ENCODE measurements at regions of chr1 and their contacts with region 1.

Region 1: GRCh38 chr1:109984456-109985275 is at the start of gene AHCYL1:
- DNase-seq: peak; percentile 98 to 99 (median 99)
- H3K4me3 ChIP-seq: peak within 1 kb of the TSS; percentile 58 to 75
- H3K4me3 Mint-ChIP-seq: peak within 1 kb of the TSS; percentile 97 to 100 (median 99)
- H3K27ac ChIP-seq: peak within 1 kb of the TSS; percentile 82
- H3K27ac Mint-ChIP-seq: peak within 1 kb of the TSS; percentile 96 to 99 (median 99)
- H3K4me1 ChIP-seq: peaks cover 31% of the 10 kb centered on the region
- H3K4me1 Mint-ChIP-seq: peaks cover 25 to 48% (median 35%) of the 10 kb centered on the region in 4 donors
- H3K27me3 ChIP-seq: no peaks in the 10 kb centered on the region
- H3K27me3 Mint-ChIP-seq: no peaks in the 10 kb centered on the region
- total RNA-seq, gene AHCYL1: 44.2 to 45.1 TPM

Region 2: DNA sequence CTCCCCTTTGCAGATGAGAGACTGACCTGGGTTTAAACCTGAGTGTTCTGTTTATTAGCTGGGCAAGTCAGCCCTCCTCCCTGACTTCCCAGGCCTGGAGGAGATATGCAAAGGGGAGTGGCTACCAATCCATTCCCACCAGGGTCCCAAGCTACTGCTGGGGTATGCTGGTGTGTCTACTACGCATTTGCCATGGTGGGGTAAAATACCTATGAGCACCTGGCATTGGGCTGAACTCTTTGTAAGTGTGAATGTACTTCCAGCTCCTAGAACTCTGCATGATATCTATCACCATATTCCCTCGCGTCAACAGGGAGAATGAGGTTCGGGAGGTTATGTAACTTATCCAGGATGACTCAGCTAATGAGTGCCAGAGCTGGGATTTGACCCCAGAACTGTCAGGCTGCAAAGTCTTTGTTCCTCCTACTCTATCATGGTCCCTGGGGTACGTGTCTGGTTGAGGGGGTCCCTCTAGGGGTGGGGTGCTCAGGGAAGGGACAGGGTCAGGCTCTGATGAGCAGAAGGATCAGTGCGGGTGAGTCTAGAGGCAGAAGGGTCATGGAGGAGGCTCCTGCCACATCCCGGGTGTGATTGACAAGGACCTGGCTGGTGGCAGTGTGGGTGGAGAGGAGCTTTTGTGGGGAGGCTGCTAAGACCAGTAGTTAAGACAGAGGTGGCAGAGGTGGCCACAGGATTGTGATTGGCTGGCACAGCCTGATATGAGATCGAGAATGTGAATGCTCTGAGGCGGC is 348.3 kb before region 1 on chr1:
- CTCF ChIA-PET with region 1: interaction called, 115 read pairs
- POLR2A ChIA-PET with region 1: interaction called, 5 read pairs
- intact Hi-C with region 1: no loop called
- DNase-seq: no peak
- H3K4me3 ChIP-seq: no peak overlapping the region
- H3K4me3 Mint-ChIP-seq: no peak overlapping the region
- H3K27ac ChIP-seq: no peak overlapping the region
- H3K27ac Mint-ChIP-seq: no peak overlapping the region
- H3K4me1 ChIP-seq: peaks cover 21% of the 10 kb centered on the region
- H3K4me1 Mint-ChIP-seq: peaks cover 13 to 26% (median 17%) of the 10 kb centered on the region in 4 donors
- H3K27me3 ChIP-seq: no peaks in the 10 kb centered on the region
- H3K27me3 Mint-ChIP-seq: peaks cover 0 to 2% of the 10 kb centered on the region in 2 donors

Region 3: DNA sequence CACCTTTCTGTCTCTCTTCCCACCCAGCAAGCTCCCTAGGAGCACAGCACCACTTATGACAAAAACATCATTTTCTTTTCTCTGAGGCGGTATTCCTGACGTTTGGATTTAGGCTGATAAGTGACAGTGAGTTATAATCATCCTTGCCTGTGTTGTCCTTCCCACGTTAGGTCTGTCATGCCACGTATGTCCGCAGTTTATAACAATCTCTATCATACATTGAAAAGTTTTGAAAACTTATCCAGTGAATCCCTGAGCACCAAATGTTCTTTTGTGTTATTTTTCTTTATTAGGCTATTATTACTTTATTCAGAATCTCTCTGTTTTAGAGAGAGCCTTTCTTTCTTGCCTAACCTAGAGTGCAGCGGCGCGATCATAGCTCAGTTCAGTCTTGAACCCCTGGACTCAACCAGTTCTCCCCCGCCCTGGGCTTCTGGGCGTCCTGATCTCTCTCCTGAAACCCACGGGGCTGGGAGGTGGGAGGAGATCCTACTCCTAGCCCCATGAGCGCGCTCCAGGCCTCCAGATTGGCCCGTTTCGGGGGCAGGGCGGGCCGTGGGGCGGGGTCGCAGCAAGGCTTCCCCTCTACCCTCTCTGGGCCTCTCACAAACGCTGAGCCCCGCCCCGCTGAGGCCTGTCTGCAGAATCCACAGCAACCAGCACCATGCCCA is 317.1 kb before region 1 on chr1 and contains the start of gene GSTM2:
- CTCF ChIA-PET with region 1: no interaction called
- POLR2A ChIA-PET with region 1: no interaction called
- intact Hi-C with region 1: no loop called
- DNase-seq: peak; percentile 64 to 79 (median 67)
- H3K4me3 ChIP-seq: peak within 1 kb of the TSS in 1 of 2 donors; percentile 30
- H3K4me3 Mint-ChIP-seq: peak within 1 kb of the TSS; percentile 70 to 88 (median 80)
- H3K27ac ChIP-seq: no peak within 1 kb of the TSS
- H3K27ac Mint-ChIP-seq: peak within 1 kb of the TSS in 5 of 7 donors; percentile 4 to 74 (median 41)
- H3K4me1 ChIP-seq: peaks cover 6% of the 10 kb centered on the region
- H3K4me1 Mint-ChIP-seq: peaks cover 8 to 21% (median 15%) of the 10 kb centered on the region in 4 donors
- H3K27me3 ChIP-seq: no peaks in the 10 kb centered on the region
- H3K27me3 Mint-ChIP-seq: no peaks in the 10 kb centered on the region
- total RNA-seq, gene GSTM2: 30.9 to 31.4 TPM

Region 4: DNA sequence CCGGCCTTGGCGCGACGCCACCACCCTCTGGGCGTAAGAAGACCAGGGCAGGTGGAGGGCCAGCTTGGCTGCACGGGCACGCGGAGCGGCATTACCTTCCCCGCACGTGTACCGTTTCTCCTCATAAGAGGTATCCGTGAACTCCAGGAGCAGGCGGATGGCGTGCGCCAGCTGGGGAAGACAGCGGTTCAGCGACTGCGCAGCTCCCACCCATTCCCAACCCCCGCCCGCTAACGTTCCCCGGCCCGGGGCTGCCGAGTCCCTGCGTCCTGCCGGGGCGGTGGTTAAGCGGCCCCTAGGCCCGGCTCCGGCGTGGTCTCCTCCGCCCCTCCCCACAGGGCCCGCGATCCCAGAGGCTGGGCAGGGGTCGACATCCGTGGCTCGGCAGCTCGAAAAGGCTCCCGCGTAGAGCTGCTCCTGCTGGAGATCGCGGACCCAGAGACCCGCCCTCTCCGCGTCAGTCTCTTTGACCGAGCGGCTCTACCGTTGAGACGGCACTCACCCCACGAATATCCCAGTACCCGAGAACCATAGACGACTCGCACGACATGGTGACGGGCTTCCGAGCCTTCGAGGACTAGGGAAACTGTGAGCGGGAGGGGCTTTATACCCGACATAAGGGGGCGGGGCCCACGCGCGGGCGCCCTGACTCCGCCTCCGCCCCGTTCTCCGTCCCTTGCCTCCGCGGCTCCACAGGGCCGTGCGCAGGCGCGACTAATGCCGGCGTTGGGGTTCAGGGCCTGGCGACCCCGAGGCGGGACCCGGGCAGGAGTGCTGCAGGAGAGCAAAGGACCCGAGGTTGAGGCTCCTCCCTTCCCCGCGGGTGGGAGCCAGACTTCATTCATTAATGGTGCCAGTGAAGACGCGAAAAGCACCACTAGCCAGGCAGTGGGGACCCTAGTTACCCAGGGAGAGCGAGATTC is 244.7 kb before region 1 on chr1:
- CTCF ChIA-PET with region 1: interaction called, 5 read pairs
- POLR2A ChIA-PET with region 1: interaction called, 7 read pairs
- intact Hi-C with region 1: loop called (anchors 1 kb)
- DNase-seq: peak; percentile 77 to 84 (median 81)
- H3K4me3 ChIP-seq: peak overlapping the region; percentile 52 to 54
- H3K4me3 Mint-ChIP-seq: peak overlapping the region; percentile 73 to 92 (median 87)
- H3K27ac ChIP-seq: peak overlapping the region; percentile 44
- H3K27ac Mint-ChIP-seq: peak overlapping the region; percentile 7 to 93 (median 90)
- H3K4me1 ChIP-seq: peaks cover 15% of the 10 kb centered on the region
- H3K4me1 Mint-ChIP-seq: peaks cover 8 to 16% (median 13%) of the 10 kb centered on the region in 4 donors
- H3K27me3 ChIP-seq: no peaks in the 10 kb centered on the region
- H3K27me3 Mint-ChIP-seq: peaks cover 0 to 18% of the 10 kb centered on the region in 2 donors

Region 5: GRCh38 chr1:109790735-109791494 is 193.8 kb before region 1 on chr1:
- CTCF ChIA-PET with region 1: interaction called, 864 read pairs
- POLR2A ChIA-PET with region 1: interaction called, 34 read pairs
- intact Hi-C with region 1: loop called (anchors 1 kb)
- DNase-seq: peak; percentile 72 to 87 (median 76)
- H3K4me3 ChIP-seq: no peak overlapping the region
- H3K4me3 Mint-ChIP-seq: peak overlapping the region in 7 of 8 donors; percentile 35 to 82 (median 55)
- H3K27ac ChIP-seq: peak overlapping the region; percentile 39
- H3K27ac Mint-ChIP-seq: peak overlapping the region; percentile 82 to 95 (median 92)
- H3K4me1 ChIP-seq: peaks cover 81% of the 10 kb centered on the region
- H3K4me1 Mint-ChIP-seq: peaks cover 43 to 91% (median 73%) of the 10 kb centered on the region in 4 donors
- H3K27me3 ChIP-seq: no peaks in the 10 kb centered on the region
- H3K27me3 Mint-ChIP-seq: no peaks in the 10 kb centered on the region

Region 6: DNA sequence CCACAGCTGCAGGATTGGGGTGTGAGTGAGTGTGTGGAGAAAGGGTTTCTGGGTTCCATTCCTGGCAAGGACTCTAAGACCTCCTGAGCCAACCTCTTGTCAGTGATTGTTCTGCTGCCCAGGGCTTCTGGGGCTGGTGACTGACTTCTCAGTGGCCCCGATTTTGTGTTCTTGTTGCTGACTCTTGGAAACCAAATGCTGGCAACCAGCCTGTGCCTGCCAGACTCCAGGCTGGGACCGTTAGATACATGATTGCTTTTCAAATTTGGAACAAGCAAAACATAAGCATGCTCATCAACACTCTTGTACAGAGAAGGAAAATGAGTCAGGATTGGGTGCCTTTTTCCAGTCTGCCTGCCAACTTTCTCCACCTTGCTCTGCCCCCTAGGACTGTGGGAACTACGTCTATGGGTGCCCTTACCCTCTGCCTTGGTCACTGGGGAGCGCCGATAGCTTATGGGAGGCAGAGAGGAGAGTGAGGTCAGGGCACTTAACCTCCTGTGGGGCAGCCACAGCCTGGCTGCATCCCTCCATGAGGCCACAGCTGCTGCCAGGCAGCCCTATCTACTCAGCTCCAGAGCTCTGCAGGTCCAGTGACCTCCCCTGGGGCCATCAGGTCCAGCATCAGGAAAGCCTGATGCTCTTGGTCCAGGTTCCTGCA is 181.6 kb before region 1 on chr1:
- CTCF ChIA-PET with region 1: interaction called, 29 read pairs
- POLR2A ChIA-PET with region 1: interaction called, 9 read pairs
- intact Hi-C with region 1: no loop called
- DNase-seq: peak in 1 of 5 donors; percentile 48
- H3K4me3 ChIP-seq: peak overlapping the region; percentile 18 to 26
- H3K4me3 Mint-ChIP-seq: peak overlapping the region; percentile 59 to 84 (median 80)
- H3K27ac ChIP-seq: peak overlapping the region; percentile 62
- H3K27ac Mint-ChIP-seq: peak overlapping the region; percentile 89 to 98 (median 93)
- H3K4me1 ChIP-seq: peaks cover 88% of the 10 kb centered on the region
- H3K4me1 Mint-ChIP-seq: peaks cover 53 to 91% (median 73%) of the 10 kb centered on the region in 4 donors
- H3K27me3 ChIP-seq: no peaks in the 10 kb centered on the region
- H3K27me3 Mint-ChIP-seq: no peaks in the 10 kb centered on the region

Region 7: GRCh38 chr1:109910123-109910962 is 74.3 kb before region 1 on chr1 and contains the start of gene CSF1:
- CTCF ChIA-PET with region 1: interaction called, 14 read pairs
- POLR2A ChIA-PET with region 1: interaction called, 8 read pairs
- intact Hi-C with region 1: loop called (anchors 2 kb)
- DNase-seq: peak; percentile 51 to 77 (median 58)
- H3K4me3 ChIP-seq: peak within 1 kb of the TSS; percentile 51 to 71
- H3K4me3 Mint-ChIP-seq: peak within 1 kb of the TSS; percentile 91 to 96 (median 94)
- H3K27ac ChIP-seq: peak within 1 kb of the TSS; percentile 57
- H3K27ac Mint-ChIP-seq: peak within 1 kb of the TSS; percentile 92 to 96 (median 94)
- H3K4me1 ChIP-seq: peaks cover 86% of the 10 kb centered on the region
- H3K4me1 Mint-ChIP-seq: peaks cover 54 to 84% (median 72%) of the 10 kb centered on the region in 4 donors
- H3K27me3 ChIP-seq: no peaks in the 10 kb centered on the region
- H3K27me3 Mint-ChIP-seq: peaks cover 0 to 1% of the 10 kb centered on the region in 2 donors
- total RNA-seq, gene CSF1: 10.3 to 13.9 TPM

Region 8: GRCh38 chr1:110011527-110012041 is 26.9 kb after region 1 on chr1:
- CTCF ChIA-PET with region 1: interaction called, 26 read pairs
- POLR2A ChIA-PET with region 1: interaction called, 5 read pairs
- intact Hi-C with region 1: no loop called
- DNase-seq: peak in 4 of 5 donors; percentile 26 to 44 (median 40)
- H3K4me3 ChIP-seq: no peak overlapping the region
- H3K4me3 Mint-ChIP-seq: no peak overlapping the region
- H3K27ac ChIP-seq: no peak overlapping the region
- H3K27ac Mint-ChIP-seq: peak overlapping the region in 5 of 7 donors; percentile 19 to 91 (median 36)
- H3K4me1 ChIP-seq: no peaks in the 10 kb centered on the region
- H3K4me1 Mint-ChIP-seq: peaks cover 0 to 5% (median 4%) of the 10 kb centered on the region in 4 donors
- H3K27me3 ChIP-seq: no peaks in the 10 kb centered on the region
- H3K27me3 Mint-ChIP-seq: no peaks in the 10 kb centered on the region

Measured in CD4-positive, alpha-beta memory T cell (primary cell).